ENCODE measurements at regions of chr1 and their contacts with region 1.

Region 1: GRCh38 chr1:93846211-93846991 is 32.6 kb downstream of the DNTTIP2 start:
- DNase-seq: no peak
- ATAC-seq: peak; percentile 78
- H3K4me3 ChIP-seq: peak overlapping the region; percentile 84
- H3K27ac ChIP-seq: peak overlapping the region; percentile 69
- H3K4me1 ChIP-seq: peaks cover 6% of the 10 kb centered on the region
- H3K27me3 ChIP-seq: no peaks in the 10 kb centered on the region
- CTCF ChIP-seq: peak; percentile 17 to 44 (median 24); a peak in 3 of 6 replicates
- EP300 ChIP-seq: no peak
- POLR2A ChIP-seq: peak; percentile 75
- RAD21 ChIP-seq: no peak

Region 2: GRCh38 chr1:93179886-93180722 is 666.3 kb before region 1 on chr1 and contains the start of gene TMED5:
- CTCF ChIA-PET with region 1: no interaction called
- POLR2A ChIA-PET with region 1: no interaction called
- RAD21 ChIA-PET with region 1: no interaction called
- SMC1A ChIA-PET with region 1: no interaction called
- in situ Hi-C with region 1: no loop called
- intact Hi-C with region 1: loop called (anchors 2 kb)
- DNase-seq: peak; percentile 90
- ATAC-seq: peak; percentile 88
- H3K4me3 ChIP-seq: peak within 1 kb of the TSS; percentile 95
- H3K27ac ChIP-seq: peak within 1 kb of the TSS; percentile 99
- H3K4me1 ChIP-seq: no peaks in the 10 kb centered on the region; the same call in 1 of the 2 replicates
- H3K27me3 ChIP-seq: no peaks in the 10 kb centered on the region
- CTCF ChIP-seq: peak in 2 of 3 experiments; percentile 1 to 9; a peak in 2 of 6 replicates
- EP300 ChIP-seq: no peak; a peak in 1 of 4 replicates
- POLR2A ChIP-seq: peak; percentile 70
- RAD21 ChIP-seq: no peak
- polyA plus RNA-seq, gene TMED5: 18.5 to 19.9 TPM

Region 3: GRCh38 chr1:93345633-93346420 is 500.6 kb before region 1 on chr1 and contains the start of gene DR1:
- CTCF ChIA-PET with region 1: no interaction called
- POLR2A ChIA-PET with region 1: no interaction called
- RAD21 ChIA-PET with region 1: interaction called, 4 read pairs
- SMC1A ChIA-PET with region 1: interaction called, 4 read pairs
- in situ Hi-C with region 1: no loop called
- intact Hi-C with region 1: loop called (anchors 5 kb)
- DNase-seq: peak; percentile 67
- ATAC-seq: peak; percentile 74
- H3K4me3 ChIP-seq: peak within 1 kb of the TSS; percentile 95
- H3K27ac ChIP-seq: peak within 1 kb of the TSS; percentile 99
- H3K4me1 ChIP-seq: peaks cover 4% of the 10 kb centered on the region; the same call in 1 of the 2 replicates
- H3K27me3 ChIP-seq: no peaks in the 10 kb centered on the region
- CTCF ChIP-seq: no peak
- EP300 ChIP-seq: 0 out of 4 replicates have a peak, but pooled peaks of 1 of the 2 experiments have one; percentile 19
- POLR2A ChIP-seq: peak; percentile 97
- RAD21 ChIP-seq: no peak
- polyA plus RNA-seq, gene DR1: 7.4 to 12.7 TPM

Region 4: GRCh38 chr1:93437976-93438605 is 408.3 kb before region 1 on chr1:
- CTCF ChIA-PET with region 1: interaction called, 9 read pairs
- POLR2A ChIA-PET with region 1: no interaction called
- RAD21 ChIA-PET with region 1: interaction called, 9 read pairs
- SMC1A ChIA-PET with region 1: interaction called, 9 read pairs
- in situ Hi-C with region 1: loop called (anchors 25 kb)
- intact Hi-C with region 1: loop called (anchors 1 kb)
- DNase-seq: no peak
- ATAC-seq: peak; percentile 74
- H3K4me3 ChIP-seq: no peak overlapping the region
- H3K27ac ChIP-seq: no peak overlapping the region
- H3K4me1 ChIP-seq: no peaks in the 10 kb centered on the region
- H3K27me3 ChIP-seq: peaks cover 0 to 2% of the 10 kb centered on the region in 2 experiments; a peak in 2 of 4 replicates
- CTCF ChIP-seq: peak; percentile 30 to 61 (median 46); a peak in 5 of 6 replicates
- EP300 ChIP-seq: no peak
- POLR2A ChIP-seq: no peak
- RAD21 ChIP-seq: peak; percentile 76

Region 5: DNA sequence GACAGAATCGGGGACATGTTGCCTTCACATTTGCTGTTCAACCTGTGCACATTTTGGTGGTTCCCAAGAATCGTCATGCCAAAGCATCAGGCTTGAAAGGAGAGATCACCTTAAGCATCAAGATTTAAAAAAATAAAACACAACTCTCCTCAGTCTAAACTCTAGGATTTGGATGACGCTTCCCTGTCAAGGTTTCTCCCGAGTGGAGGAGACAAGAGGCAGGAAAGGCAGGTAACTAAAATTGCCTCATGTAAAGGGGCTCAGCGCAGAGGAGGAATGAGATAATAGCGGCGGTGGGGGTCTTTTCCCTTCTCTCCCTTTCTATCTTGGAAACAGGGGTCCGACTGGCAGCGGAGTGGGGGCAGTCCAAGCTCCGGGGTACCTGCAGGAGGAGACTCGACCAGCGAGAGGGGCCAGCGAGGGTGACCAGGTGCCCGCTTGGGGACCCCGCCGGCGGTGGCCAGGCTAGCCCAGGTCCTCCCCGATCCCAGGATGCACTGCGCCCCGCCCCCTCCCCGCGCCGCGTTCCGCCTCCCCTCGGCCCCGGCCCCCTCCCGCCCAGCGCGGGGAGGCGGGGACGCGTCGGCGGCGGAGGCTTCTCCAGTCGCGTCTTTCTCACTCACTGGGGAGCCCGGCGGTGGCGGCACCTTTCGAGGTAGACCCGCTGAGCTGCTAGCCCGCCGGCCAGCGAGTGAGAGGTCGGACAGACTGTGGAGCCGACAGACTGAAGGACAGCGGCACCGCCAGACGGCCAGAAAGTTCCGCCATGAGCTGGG is 398.7 kb before region 1 on chr1 and contains the start of gene FNBP1L:
- CTCF ChIA-PET with region 1: interaction called, 4 read pairs
- POLR2A ChIA-PET with region 1: no interaction called
- RAD21 ChIA-PET with region 1: no interaction called
- SMC1A ChIA-PET with region 1: interaction called, 3 read pairs
- in situ Hi-C with region 1: loop called (anchors 25 kb)
- intact Hi-C with region 1: no loop called
- DNase-seq: no peak
- ATAC-seq: peak; percentile 73
- H3K4me3 ChIP-seq: peak within 1 kb of the TSS; percentile 61
- H3K27ac ChIP-seq: no peak within 1 kb of the TSS
- H3K4me1 ChIP-seq: peaks cover 3% of the 10 kb centered on the region; the same call in 1 of the 2 replicates
- H3K27me3 ChIP-seq: peaks cover 9 to 25% of the 10 kb centered on the region in 2 experiments
- CTCF ChIP-seq: no peak
- EP300 ChIP-seq: no peak
- POLR2A ChIP-seq: no peak; the same call in 1 of the 2 replicates
- RAD21 ChIP-seq: no peak
- polyA plus RNA-seq, gene FNBP1L: 0.02 TPM in 1 of 2 experiments, not detected in the other

Region 6: DNA sequence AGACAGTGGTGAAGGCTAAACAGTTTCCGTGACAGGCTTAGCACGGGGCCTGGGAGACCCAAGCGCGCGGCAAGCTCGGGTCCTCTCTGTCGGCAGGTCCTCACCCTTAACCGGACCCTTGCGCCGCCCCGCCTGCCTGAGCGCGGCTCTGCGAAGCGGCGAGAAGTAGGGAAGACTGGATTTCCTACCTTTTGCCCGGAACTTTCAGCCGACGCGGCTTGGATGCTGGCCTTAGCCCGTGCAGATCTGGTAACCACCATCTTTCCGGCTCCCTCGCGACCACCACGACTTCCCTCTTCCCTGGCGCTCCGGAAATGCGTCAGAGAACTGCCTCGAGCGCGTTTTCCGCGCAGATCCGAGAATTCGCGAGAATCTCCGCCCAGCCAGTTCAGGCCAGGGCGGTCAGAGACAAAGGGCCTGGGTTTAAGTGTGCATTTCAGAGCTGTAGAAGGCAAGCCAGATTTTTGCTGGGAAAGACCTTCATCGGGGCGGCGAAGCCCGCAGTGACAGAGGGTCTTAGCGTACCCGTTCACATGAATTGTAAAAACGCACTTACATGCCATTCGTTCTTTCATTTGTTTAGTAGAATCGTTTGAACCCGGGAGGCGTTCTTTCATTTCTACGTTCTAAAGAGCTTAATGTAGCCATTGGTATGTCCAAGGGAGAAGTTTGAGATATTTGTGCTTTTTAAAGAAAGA is 32.6 kb after region 1 on chr1 and contains the start of gene DNTTIP2:
- CTCF ChIA-PET with region 1: interaction called, 7 read pairs
- POLR2A ChIA-PET with region 1: interaction called, 3 read pairs
- RAD21 ChIA-PET with region 1: interaction called, 5 read pairs
- SMC1A ChIA-PET with region 1: no interaction called
- in situ Hi-C with region 1: no loop called
- intact Hi-C with region 1: loop called (anchors 2 kb)
- DNase-seq: peak; percentile 69
- ATAC-seq: peak; percentile 97
- H3K4me3 ChIP-seq: peak within 1 kb of the TSS; percentile 95
- H3K27ac ChIP-seq: peak within 1 kb of the TSS; percentile 94
- H3K4me1 ChIP-seq: peaks cover 9% of the 10 kb centered on the region; the same call in 1 of the 2 replicates
- H3K27me3 ChIP-seq: no peaks in the 10 kb centered on the region
- CTCF ChIP-seq: no peak
- EP300 ChIP-seq: no peak
- POLR2A ChIP-seq: peak; percentile 99
- RAD21 ChIP-seq: no peak
- polyA plus RNA-seq, gene DNTTIP2: 79.0 to 82.8 TPM

Region 7: GRCh38 chr1:93909146-93910050 is 63.0 kb after region 1 on chr1 and contains the start of gene GCLM:
- CTCF ChIA-PET with region 1: interaction called, 4 read pairs
- POLR2A ChIA-PET with region 1: no interaction called
- RAD21 ChIA-PET with region 1: interaction called, 4 read pairs
- SMC1A ChIA-PET with region 1: interaction called, 4 read pairs
- in situ Hi-C with region 1: no loop called
- intact Hi-C with region 1: loop called (anchors 2 kb)
- DNase-seq: peak; percentile 40
- ATAC-seq: peak; percentile 93
- H3K4me3 ChIP-seq: peak within 1 kb of the TSS; percentile 74
- H3K27ac ChIP-seq: peak within 1 kb of the TSS; percentile 42; the same call in 1 of the 2 replicates
- H3K4me1 ChIP-seq: no peaks in the 10 kb centered on the region; the same call in 1 of the 2 replicates
- H3K27me3 ChIP-seq: no peaks in the 10 kb centered on the region
- CTCF ChIP-seq: peak; percentile 70 to 98 (median 79); a peak in 5 of 6 replicates
- EP300 ChIP-seq: no peak
- POLR2A ChIP-seq: peak; percentile 61
- RAD21 ChIP-seq: 0 out of 2 replicates have a peak, but pooled peaks have one; percentile 20
- polyA plus RNA-seq, gene GCLM: 3.6 to 5.0 TPM

Measured in GM12878 (cell line).